Activated CD8-positive, alpha-beta T cell treated with anti-CD3 and anti-CD28 coated beads for 36 hours (primary cell): ENCODE measurements at regions of chr21 and their contacts with region 1.

Region 1: GRCh38 chr21:46635324-46636172 is at the start of gene PRMT2:
- DNase-seq: peak; percentile 96
- ATAC-seq: peak; percentile 89
- H3K4me3 Mint-ChIP-seq: peak within 1 kb of the TSS; percentile 93
- H3K27ac Mint-ChIP-seq: peak within 1 kb of the TSS; percentile 97
- H3K4me1 Mint-ChIP-seq: peaks cover 63% of the 10 kb centered on the region
- H3K27me3 Mint-ChIP-seq: no peaks in the 10 kb centered on the region
- CTCF ChIP-seq: no peak
- total RNA-seq, gene PRMT2: 54.4 to 58.2 TPM

Region 2: GRCh38 chr21:46356494-46357334 is 278.8 kb before region 1 on chr21:
- CTCF ChIA-PET with region 1: no interaction called
- POLR2A ChIA-PET with region 1: no interaction called
- intact Hi-C with region 1: no loop called
- DNase-seq: no peak
- ATAC-seq: no peak
- H3K4me3 Mint-ChIP-seq: no peak overlapping the region
- H3K27ac Mint-ChIP-seq: no peak overlapping the region
- H3K4me1 Mint-ChIP-seq: peaks cover 3% of the 10 kb centered on the region
- H3K27me3 Mint-ChIP-seq: no peaks in the 10 kb centered on the region
- CTCF ChIP-seq: no peak

Region 3: GRCh38 chr21:46551636-46552241 is 83.8 kb before region 1 on chr21:
- CTCF ChIA-PET with region 1: interaction called, 4 read pairs
- POLR2A ChIA-PET with region 1: interaction called, 12 read pairs
- intact Hi-C with region 1: no loop called
- DNase-seq: peak; percentile 67
- ATAC-seq: peak; percentile 76
- H3K4me3 Mint-ChIP-seq: peak overlapping the region; percentile 66
- H3K27ac Mint-ChIP-seq: peak overlapping the region; percentile 87
- H3K4me1 Mint-ChIP-seq: peaks cover 60% of the 10 kb centered on the region
- H3K27me3 Mint-ChIP-seq: no peaks in the 10 kb centered on the region
- CTCF ChIP-seq: peak; percentile 8

Region 4: GRCh38 chr21:46559291-46559983 is 76.1 kb before region 1 on chr21:
- CTCF ChIA-PET with region 1: interaction called, 6 read pairs
- POLR2A ChIA-PET with region 1: interaction called, 33 read pairs
- intact Hi-C with region 1: no loop called
- DNase-seq: peak; percentile 90
- ATAC-seq: peak; percentile 86
- H3K4me3 Mint-ChIP-seq: peak overlapping the region; percentile 77
- H3K27ac Mint-ChIP-seq: peak overlapping the region; percentile 98
- H3K4me1 Mint-ChIP-seq: peaks cover 67% of the 10 kb centered on the region
- H3K27me3 Mint-ChIP-seq: no peaks in the 10 kb centered on the region
- CTCF ChIP-seq: no peak

Region 5: DNA sequence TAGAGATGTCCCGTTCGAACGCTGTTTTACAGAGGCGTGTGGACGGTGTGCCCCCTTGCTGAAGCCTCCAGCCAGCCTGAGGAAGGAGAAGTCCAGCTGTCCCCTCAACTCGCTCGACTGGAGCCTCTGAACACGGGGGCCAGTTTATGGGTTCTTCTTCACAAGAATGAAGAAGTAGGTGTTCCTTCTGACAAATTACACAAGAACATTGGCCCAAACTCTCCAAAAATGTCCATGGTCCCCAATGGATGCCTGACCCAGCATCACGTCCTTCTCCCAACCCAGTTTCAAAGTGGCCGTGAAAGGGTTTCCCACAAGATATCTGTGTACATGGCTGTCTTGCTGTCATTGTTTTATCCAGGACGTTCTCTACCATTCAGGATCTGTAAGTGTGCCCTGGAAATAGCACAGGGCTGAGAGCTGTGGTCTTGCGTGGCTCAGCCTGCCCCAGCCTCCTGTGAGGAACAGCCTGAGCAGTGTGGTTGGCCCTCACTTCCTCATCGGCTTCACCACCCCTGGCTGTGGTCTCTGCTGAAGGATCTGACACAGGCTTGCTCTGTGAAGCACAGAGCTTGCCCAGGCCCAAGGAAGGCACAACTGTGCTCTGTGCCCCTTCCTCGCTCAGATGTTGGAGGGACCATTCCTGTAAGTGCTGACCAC is 29.7 kb before region 1 on chr21:
- CTCF ChIA-PET with region 1: interaction called, 3 read pairs
- POLR2A ChIA-PET with region 1: interaction called, 19 read pairs
- intact Hi-C with region 1: no loop called
- DNase-seq: peak; percentile 67
- ATAC-seq: peak; percentile 85
- H3K4me3 Mint-ChIP-seq: no peak overlapping the region
- H3K27ac Mint-ChIP-seq: peak overlapping the region; percentile 82
- H3K4me1 Mint-ChIP-seq: peaks cover 42% of the 10 kb centered on the region
- H3K27me3 Mint-ChIP-seq: no peaks in the 10 kb centered on the region
- CTCF ChIP-seq: no peak

Region 6: GRCh38 chr21:46622226-46622625 is 13.3 kb before region 1 on chr21:
- CTCF ChIA-PET with region 1: interaction called, 22 read pairs
- POLR2A ChIA-PET with region 1: interaction called, 52 read pairs
- intact Hi-C with region 1: no loop called
- DNase-seq: peak; percentile 49
- ATAC-seq: peak; percentile 72
- H3K4me3 Mint-ChIP-seq: peak overlapping the region; percentile 48
- H3K27ac Mint-ChIP-seq: peak overlapping the region; percentile 86
- H3K4me1 Mint-ChIP-seq: peaks cover 55% of the 10 kb centered on the region
- H3K27me3 Mint-ChIP-seq: no peaks in the 10 kb centered on the region
- CTCF ChIP-seq: no peak